ENCODE measurements at regions of chr7 and their contacts with region 1.

Region 1: DNA sequence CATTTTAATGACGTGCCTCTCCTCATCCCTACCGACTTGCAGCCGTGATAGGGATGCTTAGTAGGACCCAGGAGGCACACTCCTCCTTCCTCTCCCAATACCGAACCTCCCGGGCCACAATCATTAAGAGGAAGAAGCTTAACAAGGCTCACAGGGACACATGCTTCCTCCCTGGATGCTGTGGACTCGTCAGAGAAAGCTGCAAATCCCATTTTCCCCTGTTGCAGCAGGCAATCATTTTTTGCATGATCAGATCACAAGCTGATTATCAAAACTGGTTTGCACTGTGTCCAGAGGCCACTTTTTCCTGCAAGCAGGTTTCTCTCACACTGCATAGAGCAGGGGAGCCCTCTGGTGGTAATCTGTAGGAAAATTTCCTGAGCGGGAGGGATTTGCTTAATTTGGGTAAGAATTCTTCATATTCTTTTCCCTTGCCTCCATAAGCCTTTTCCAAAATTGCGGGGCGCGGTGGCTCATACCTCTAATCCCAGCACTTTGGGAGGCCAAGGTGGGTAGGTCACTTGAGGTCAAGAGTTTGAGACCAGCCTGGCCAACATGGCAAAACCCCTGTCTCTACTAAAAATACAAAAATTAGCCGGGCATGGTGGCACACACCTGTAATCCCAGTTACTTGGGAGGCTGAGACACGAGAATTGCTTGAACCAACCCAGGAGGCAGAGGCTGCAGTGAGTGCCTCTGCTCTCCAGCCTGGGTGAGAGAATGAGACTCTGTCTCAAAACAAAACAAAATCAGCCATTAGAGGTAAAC is 16.1 kb upstream of the LAMB4 start:
- DNase-seq: peak; percentile 12
- ATAC-seq: peak; percentile 86
- H3K4me3 ChIP-seq: no peak overlapping the region
- H3K27ac ChIP-seq: no peak overlapping the region
- H3K4me1 ChIP-seq: no peaks in the 10 kb centered on the region
- H3K27me3 ChIP-seq: peaks cover 0 to 4% of the 10 kb centered on the region in 2 experiments; a peak in 1 of 4 replicates
- CTCF ChIP-seq: peak; percentile 81 to 94 (median 89)
- EP300 ChIP-seq: no peak
- POLR2A ChIP-seq: no peak
- RAD21 ChIP-seq: peak; percentile 100

Region 2: DNA sequence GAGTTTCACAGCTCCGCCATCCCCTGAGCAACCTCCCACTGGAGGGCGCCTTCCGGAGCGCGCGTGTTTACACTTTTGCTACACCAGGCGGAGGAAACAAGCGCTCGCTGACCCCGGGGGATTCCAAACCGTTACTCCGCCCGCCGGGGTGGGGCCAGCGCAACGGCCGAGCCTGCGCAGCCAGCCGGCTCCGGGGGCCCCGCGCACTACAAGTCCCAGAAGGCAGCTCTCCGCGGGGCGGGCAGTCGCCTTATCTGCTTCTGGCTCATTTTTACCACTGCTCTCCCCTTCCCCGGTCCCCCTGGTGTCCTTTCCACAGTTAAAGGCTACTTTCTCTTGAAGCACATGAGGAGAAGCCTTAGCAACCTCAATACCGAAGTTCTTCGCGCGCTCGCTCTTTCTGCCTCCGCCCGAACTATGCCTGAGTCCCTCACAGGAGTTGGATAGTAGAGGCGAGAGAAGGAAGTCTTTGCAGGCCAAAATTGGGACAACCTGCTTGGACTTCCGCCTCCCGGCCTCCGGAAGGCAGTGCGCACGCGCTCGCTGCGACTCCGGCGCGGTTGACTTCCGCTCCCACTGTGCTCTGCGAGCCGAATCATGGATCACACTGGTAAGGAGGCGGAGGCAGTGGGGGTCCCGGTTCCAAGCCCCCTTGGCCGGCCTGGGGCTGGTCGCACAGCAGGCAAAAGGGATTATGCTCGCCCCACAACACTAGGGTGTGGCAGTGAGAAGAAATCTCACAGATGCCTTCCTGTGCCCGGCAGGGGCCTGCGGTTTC is 402.5 kb before region 1 on chr7 and contains the start of gene CBLL1:
- CTCF ChIA-PET with region 1: no interaction called
- POLR2A ChIA-PET with region 1: no interaction called
- RAD21 ChIA-PET with region 1: no interaction called
- SMC1A ChIA-PET with region 1: interaction called, 3 read pairs
- in situ Hi-C with region 1: no loop called
- intact Hi-C with region 1: loop called (anchors 10 kb)
- DNase-seq: peak; percentile 79
- ATAC-seq: peak; percentile 94
- H3K4me3 ChIP-seq: peak within 1 kb of the TSS; percentile 87
- H3K27ac ChIP-seq: peak within 1 kb of the TSS; percentile 100
- H3K4me1 ChIP-seq: peaks cover 8% of the 10 kb centered on the region
- H3K27me3 ChIP-seq: no peaks in the 10 kb centered on the region
- CTCF ChIP-seq: peak; percentile 67 to 74 (median 72)
- EP300 ChIP-seq: peak in 1 of 2 experiments; percentile 23; a peak in 1 of 4 replicates
- POLR2A ChIP-seq: peak; percentile 89
- RAD21 ChIP-seq: peak; percentile 54
- polyA plus RNA-seq, gene CBLL1: 8.6 to 9.3 TPM

Region 3: GRCh38 chr7:108055611-108056021 is 90.6 kb before region 1 on chr7:
- CTCF ChIA-PET with region 1: no interaction called
- POLR2A ChIA-PET with region 1: no interaction called
- RAD21 ChIA-PET with region 1: no interaction called
- SMC1A ChIA-PET with region 1: no interaction called
- in situ Hi-C with region 1: no loop called
- intact Hi-C with region 1: no loop called
- DNase-seq: no peak
- ATAC-seq: no peak
- H3K4me3 ChIP-seq: no peak overlapping the region
- H3K27ac ChIP-seq: no peak overlapping the region
- H3K4me1 ChIP-seq: no peaks in the 10 kb centered on the region
- H3K27me3 ChIP-seq: peaks cover 2 to 3% of the 10 kb centered on the region in 2 experiments; a peak in 1 of 4 replicates
- CTCF ChIP-seq: no peak
- EP300 ChIP-seq: no peak
- POLR2A ChIP-seq: no peak
- RAD21 ChIP-seq: no peak

Region 4: DNA sequence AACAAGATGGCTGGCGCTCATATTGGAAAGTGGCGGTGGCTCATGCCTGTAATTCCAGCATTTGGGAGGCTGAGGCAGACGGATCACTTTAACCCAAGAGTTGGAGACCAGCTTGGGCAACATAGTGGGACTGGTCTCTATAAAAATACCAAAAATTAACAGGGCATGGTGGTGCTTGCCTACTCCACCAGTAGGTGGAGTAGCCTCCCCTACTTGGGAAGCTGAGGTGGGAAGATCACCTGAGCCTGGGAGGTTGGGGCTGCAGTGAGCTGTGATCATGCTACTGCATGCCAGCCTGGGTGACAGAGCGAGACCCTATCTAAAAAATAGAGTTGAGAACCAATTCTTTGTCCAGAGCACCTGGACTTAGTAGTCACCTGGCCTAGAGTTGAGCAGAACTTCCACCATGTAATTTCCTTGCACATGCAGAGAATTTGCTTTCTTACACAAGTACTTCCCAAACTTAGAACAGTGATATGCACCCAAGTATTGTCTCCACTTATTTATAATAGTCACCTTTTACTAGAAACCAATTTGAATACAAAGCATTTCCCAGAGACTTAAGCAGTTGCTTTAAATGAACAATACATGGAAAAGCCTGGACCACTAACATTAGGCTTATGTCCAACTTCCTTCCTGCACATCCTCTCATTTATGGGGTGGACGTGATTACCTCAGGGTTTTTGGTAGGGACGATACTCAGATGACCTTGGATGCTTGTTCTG is 32.0 kb before region 1 on chr7:
- CTCF ChIA-PET with region 1: interaction called, 254 read pairs
- POLR2A ChIA-PET with region 1: interaction called, 9 read pairs
- RAD21 ChIA-PET with region 1: interaction called, 142 read pairs
- SMC1A ChIA-PET with region 1: interaction called, 130 read pairs
- in situ Hi-C with region 1: loop called (anchors 5 kb)
- intact Hi-C with region 1: loop called (anchors 1 kb)
- DNase-seq: no peak
- ATAC-seq: peak; percentile 95
- H3K4me3 ChIP-seq: no peak overlapping the region
- H3K27ac ChIP-seq: no peak overlapping the region
- H3K4me1 ChIP-seq: no peaks in the 10 kb centered on the region
- H3K27me3 ChIP-seq: no peaks in the 10 kb centered on the region
- CTCF ChIP-seq: peak; percentile 68 to 80 (median 70)
- EP300 ChIP-seq: no peak
- POLR2A ChIP-seq: no peak
- RAD21 ChIP-seq: peak; percentile 94

Region 5: DNA sequence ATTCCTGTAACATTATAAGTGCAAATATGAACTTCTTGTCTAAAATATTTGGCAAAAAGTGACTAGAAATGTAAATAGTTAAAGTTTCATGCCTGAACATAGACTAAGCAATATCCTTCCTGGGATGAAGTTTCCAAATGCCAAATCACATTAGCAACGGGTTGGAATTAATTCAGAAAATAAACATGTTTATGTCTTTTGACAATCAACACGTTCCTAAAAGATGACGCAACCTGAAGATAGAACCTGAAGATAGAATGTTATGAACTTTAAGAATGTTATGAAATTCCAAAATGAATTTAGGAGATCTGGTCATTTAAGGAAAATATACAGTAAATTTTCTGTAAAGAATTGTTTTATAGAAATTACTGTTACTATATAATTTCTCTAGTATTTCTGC is 25.3 kb before region 1 on chr7:
- CTCF ChIA-PET with region 1: interaction called, 73 read pairs
- POLR2A ChIA-PET with region 1: interaction called, 7 read pairs
- RAD21 ChIA-PET with region 1: interaction called, 36 read pairs
- SMC1A ChIA-PET with region 1: interaction called, 79 read pairs
- in situ Hi-C with region 1: no loop called
- intact Hi-C with region 1: no loop called
- DNase-seq: no peak
- ATAC-seq: no peak
- H3K4me3 ChIP-seq: no peak overlapping the region
- H3K27ac ChIP-seq: no peak overlapping the region
- H3K4me1 ChIP-seq: no peaks in the 10 kb centered on the region
- H3K27me3 ChIP-seq: 0 out of 4 replicates have a peak, but pooled peaks cover 0 to 3% of the 10 kb centered on the region in 2 experiments
- CTCF ChIP-seq: no peak
- EP300 ChIP-seq: no peak
- POLR2A ChIP-seq: no peak
- RAD21 ChIP-seq: no peak

Region 6: DNA sequence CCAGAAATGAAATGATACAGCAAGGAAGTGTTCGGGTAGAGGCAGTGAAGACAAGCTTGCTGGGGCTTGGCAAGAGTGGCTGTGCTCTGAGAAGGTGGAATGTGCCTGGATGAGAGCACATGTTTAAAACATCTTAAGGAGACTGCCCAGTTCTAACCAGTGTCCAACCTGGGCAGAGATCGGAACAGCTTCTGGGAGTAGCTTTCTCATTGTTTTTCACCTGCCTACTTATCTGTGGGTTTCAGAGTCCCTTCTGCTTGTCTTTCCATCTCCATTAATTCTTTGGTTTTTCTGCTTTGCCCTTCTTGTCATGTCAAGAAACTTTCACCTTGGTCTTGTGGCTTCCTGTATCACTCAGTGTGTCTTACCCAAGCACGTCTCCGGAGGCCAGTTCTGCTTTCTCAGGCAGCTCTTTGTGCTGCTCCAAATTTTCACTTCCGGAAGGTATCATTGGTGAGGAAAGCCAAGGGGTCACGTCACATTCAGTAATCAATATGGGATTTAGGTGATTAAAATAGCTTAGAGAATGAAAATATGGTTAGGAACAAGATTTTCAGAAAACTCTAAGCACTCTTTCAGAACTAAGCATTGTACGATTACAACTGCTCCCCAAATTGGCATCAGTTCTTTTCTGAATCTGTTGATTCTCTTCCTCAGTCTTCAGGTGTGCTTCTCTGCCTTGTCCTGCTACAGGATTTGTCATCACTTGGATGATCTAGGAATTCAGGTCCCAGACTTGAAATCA is 10.6 kb before region 1 on chr7:
- CTCF ChIA-PET with region 1: interaction called, 85 read pairs
- POLR2A ChIA-PET with region 1: interaction called, 12 read pairs
- RAD21 ChIA-PET with region 1: interaction called, 65 read pairs
- SMC1A ChIA-PET with region 1: interaction called, 122 read pairs
- in situ Hi-C with region 1: no loop called
- intact Hi-C with region 1: no loop called
- DNase-seq: peak; percentile 88
- ATAC-seq: peak; percentile 93
- H3K4me3 ChIP-seq: 0 out of 2 replicates have a peak overlapping the region, but pooled peaks have one; percentile 14
- H3K27ac ChIP-seq: peak overlapping the region; percentile 59
- H3K4me1 ChIP-seq: peaks cover 18% of the 10 kb centered on the region
- H3K27me3 ChIP-seq: no peaks in the 10 kb centered on the region
- CTCF ChIP-seq: no peak
- EP300 ChIP-seq: peak; percentile 79 to 93; a peak in 3 of 4 replicates
- POLR2A ChIP-seq: no peak
- RAD21 ChIP-seq: 0 out of 2 replicates have a peak, but pooled peaks have one; percentile 8

Region 7: GRCh38 chr7:108158776-108159175 is 12.5 kb after region 1 on chr7:
- CTCF ChIA-PET with region 1: interaction called, 3 read pairs
- POLR2A ChIA-PET with region 1: no interaction called
- RAD21 ChIA-PET with region 1: interaction called, 4 read pairs
- SMC1A ChIA-PET with region 1: interaction called, 17 read pairs
- in situ Hi-C with region 1: no loop called
- intact Hi-C with region 1: no loop called
- DNase-seq: no peak
- ATAC-seq: no peak
- H3K4me3 ChIP-seq: no peak overlapping the region
- H3K27ac ChIP-seq: no peak overlapping the region
- H3K4me1 ChIP-seq: no peaks in the 10 kb centered on the region
- H3K27me3 ChIP-seq: no peaks in the 10 kb centered on the region; a peak in 2 of 4 replicates
- CTCF ChIP-seq: no peak
- EP300 ChIP-seq: no peak
- POLR2A ChIP-seq: no peak
- RAD21 ChIP-seq: no peak

Region 8: GRCh38 chr7:108196004-108196403 is 49.8 kb after region 1 on chr7:
- CTCF ChIA-PET with region 1: no interaction called
- POLR2A ChIA-PET with region 1: no interaction called
- RAD21 ChIA-PET with region 1: no interaction called
- SMC1A ChIA-PET with region 1: no interaction called
- in situ Hi-C with region 1: no loop called
- intact Hi-C with region 1: no loop called
- DNase-seq: no peak
- ATAC-seq: no peak
- H3K4me3 ChIP-seq: no peak overlapping the region
- H3K27ac ChIP-seq: no peak overlapping the region
- H3K4me1 ChIP-seq: no peaks in the 10 kb centered on the region
- H3K27me3 ChIP-seq: no peaks in the 10 kb centered on the region
- CTCF ChIP-seq: no peak
- EP300 ChIP-seq: no peak
- POLR2A ChIP-seq: no peak
- RAD21 ChIP-seq: no peak